Heart right ventricle (tissue), 16 donors: ENCODE measurements at regions of chr1 and their contacts with region 1.

Region 1: DNA sequence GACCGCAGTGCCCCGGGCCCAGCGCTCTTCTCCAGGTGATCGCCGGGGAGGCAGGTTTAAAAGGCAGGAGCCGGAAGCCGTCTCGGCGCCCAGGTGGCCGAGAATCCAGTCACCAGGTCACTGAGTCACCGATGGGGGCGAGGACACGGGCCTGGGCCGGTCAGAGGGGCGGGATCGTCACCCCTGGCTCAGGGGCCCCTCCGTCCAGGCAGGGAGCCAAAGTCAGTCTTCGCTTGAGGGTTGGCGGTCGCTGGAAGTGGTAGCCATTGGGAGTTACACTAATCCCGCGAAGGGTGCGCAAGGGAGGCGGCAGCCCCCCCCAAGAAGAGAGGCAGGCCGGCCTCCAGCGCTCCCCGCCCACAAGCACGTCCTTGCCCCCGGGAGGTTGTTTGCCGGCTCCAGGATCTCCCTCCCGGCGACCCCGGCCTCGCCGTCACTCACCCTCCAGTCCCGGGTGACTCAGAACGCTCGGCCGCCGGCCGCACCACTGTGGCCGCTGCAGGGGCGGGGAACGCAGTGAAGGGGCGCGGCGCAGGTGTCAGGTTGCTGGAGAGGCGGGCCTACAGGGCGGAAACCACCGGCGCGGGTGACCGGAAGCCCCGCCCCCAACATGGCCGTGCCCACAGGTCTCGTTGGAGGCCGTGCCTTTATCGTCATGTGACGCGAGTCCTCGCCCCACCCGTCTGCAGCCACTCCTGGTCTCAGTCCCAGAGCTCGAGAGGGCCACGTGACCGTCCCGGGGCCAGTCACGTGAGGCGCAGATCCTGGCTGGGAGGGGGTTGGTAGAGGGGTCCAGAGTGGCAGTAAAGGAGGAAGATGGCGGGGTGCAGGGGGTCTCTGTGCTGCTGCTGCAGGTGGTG is at the starts of genes CLCN6 and MTHFR:
- DNase-seq: peak; percentile 99
- ATAC-seq: peak; percentile 86 to 92 (median 88)
- H3K4me3 ChIP-seq: peak within 1 kb of the TSS; percentile 62 to 96 (median 80)
- H3K27ac ChIP-seq: peak within 1 kb of the TSS; percentile 96 to 100 (median 99)
- H3K4me1 ChIP-seq: peaks cover 16 to 75% (median 66%) of the 10 kb centered on the region in 9 donors
- H3K27me3 ChIP-seq: no peaks in the 10 kb centered on the region
- CTCF ChIP-seq: no peak
- total RNA-seq, gene CLCN6: 13.3 to 20.9 (median 16.9) TPM
- total RNA-seq, gene MTHFR: 28.8 to 75.8 (median 40.5) TPM

Region 2: DNA sequence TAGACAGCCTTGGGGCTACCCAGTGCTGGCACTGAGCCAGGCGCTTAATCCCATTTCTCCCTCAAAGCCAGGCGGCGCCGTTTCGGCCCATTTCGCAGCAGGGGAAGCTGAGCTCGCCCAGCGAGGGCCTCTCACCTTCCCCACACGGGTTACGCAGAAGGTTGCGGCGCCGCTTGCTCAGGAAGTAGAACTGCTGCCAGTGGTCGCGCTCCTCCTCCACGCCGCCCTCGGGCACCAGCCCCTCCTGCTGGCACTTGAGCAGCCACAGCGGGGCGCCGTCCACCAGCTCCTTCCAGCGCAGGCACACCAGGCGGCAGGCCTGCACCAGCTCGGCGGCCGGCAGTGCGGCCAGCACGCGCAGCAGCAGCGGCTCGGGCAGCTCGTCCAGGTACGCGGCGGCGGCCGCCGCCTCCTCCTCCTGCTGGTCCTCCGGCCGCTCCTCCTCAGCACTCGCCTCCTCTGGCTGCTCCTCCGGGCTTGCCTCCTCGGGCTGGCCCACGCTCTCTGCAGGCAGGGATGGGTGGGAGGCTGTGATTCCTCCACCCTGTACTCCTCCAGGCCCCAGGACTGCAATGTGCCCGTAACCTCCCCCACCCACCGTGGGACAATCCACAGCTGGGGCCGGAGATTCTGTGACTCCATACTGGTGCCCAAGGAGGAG is 155.2 kb before region 1 on chr1:
- intact Hi-C with region 1: no loop called
- DNase-seq: peak; percentile 51 to 84
- ATAC-seq: peak; percentile 48 to 77 (median 66)
- H3K4me3 ChIP-seq: peak overlapping the region in 4 of 10 donors; percentile 10 to 35 (median 20)
- H3K27ac ChIP-seq: peak overlapping the region in 1 of 10 donors; percentile 21
- H3K4me1 ChIP-seq: peaks cover 4 to 46% (median 30%) of the 10 kb centered on the region in 9 donors
- H3K27me3 ChIP-seq: peaks cover 3 to 51% (median 25%) of the 10 kb centered on the region in 7 donors
- CTCF ChIP-seq: peak; percentile 31 to 84 (median 65)

Region 3: DNA sequence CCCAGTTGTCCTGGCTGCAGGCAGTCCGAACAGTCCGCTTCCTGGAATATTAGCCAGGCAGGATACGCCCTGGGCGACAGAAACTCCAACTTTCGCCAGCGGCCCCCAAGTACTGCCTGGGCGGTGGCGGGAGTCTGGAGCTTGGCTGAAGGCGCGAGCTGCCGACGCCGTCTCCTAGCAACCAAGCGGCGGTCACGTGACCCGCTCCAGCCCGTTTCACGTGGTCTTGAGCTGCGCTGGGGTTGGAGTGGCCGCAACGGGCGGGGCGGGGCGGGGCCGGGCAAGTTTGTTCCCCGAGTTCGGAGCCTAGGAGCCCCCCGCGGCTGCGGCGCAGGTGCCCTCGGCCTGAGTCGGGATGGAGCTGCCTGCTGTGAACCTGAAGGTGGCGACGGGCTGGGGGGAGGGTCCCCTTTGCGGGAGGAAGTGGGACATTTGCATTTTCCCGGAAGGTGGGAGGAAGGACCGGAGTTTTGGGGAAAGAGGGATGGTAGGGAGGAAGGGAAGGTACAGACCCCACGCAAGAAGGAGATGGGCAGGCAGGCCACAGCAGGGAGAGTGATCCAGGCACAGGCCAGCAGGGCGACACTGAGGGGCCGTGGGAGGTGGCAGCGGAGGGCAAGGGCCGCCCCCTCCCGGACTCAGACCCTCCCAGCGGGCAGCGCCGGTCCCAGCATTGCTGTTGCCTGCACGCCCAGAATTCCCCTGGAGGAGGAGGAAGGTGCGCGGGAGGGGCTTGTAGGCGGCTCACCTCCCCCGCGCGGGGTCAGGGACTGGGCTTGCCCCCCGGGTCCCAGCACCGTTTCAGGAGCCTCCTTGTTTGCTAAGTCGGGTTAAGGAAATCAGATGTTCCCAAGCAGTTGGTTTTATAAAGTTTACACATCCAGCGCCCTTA is 69.6 kb before region 1 on chr1 and contains the start of gene AGTRAP:
- intact Hi-C with region 1: loop called in 6 of 10 experiments (anchors 2 to 10 kb)
- DNase-seq: peak; percentile 97 to 98
- ATAC-seq: peak; percentile 83 to 94 (median 92)
- H3K4me3 ChIP-seq: peak within 1 kb of the TSS; percentile 36 to 99 (median 84)
- H3K27ac ChIP-seq: peak within 1 kb of the TSS; percentile 41 to 97 (median 88)
- H3K4me1 ChIP-seq: peaks cover 6 to 75% (median 36%) of the 10 kb centered on the region in 9 donors
- H3K27me3 ChIP-seq: no peaks in the 10 kb centered on the region
- CTCF ChIP-seq: peak in 2 of 9 donors; percentile 17 to 28
- total RNA-seq, gene AGTRAP: 12.9 to 37.9 (median 16.9) TPM

Region 4: GRCh38 chr1:11768821-11769220 is 36.9 kb before region 1 on chr1:
- intact Hi-C with region 1: no loop called
- DNase-seq: no peak
- ATAC-seq: peak in 4 of 8 donors; percentile 27 to 66 (median 46)
- H3K4me3 ChIP-seq: no peak overlapping the region
- H3K27ac ChIP-seq: peak overlapping the region in 2 of 10 donors; percentile 43 to 56
- H3K4me1 ChIP-seq: peaks cover 0 to 16% (median 8%) of the 10 kb centered on the region in 9 donors
- H3K27me3 ChIP-seq: no peaks in the 10 kb centered on the region
- CTCF ChIP-seq: no peak

Region 5: GRCh38 chr1:11784993-11785769 is 20.5 kb before region 1 on chr1:
- intact Hi-C with region 1: loop called in 4 of 10 experiments (anchors 2 kb)
- DNase-seq: peak; percentile 69 to 79
- ATAC-seq: peak; percentile 50 to 68 (median 61)
- H3K4me3 ChIP-seq: peak overlapping the region in 9 of 10 donors; percentile 12 to 51 (median 40)
- H3K27ac ChIP-seq: peak overlapping the region; percentile 31 to 99 (median 85)
- H3K4me1 ChIP-seq: peaks cover 42 to 62% (median 58%) of the 10 kb centered on the region in 9 donors
- H3K27me3 ChIP-seq: no peaks in the 10 kb centered on the region
- CTCF ChIP-seq: peak; percentile 75 to 95 (median 91)

Region 6: GRCh38 chr1:11790880-11791715 is 14.6 kb before region 1 on chr1:
- intact Hi-C with region 1: loop called in 4 of 10 experiments (anchors 2 kb)
- DNase-seq: peak; percentile 87 to 97
- ATAC-seq: peak; percentile 80 to 92 (median 88)
- H3K4me3 ChIP-seq: peak overlapping the region in 2 of 10 donors; percentile 15 to 20
- H3K27ac ChIP-seq: peak overlapping the region; percentile 92 to 99 (median 97)
- H3K4me1 ChIP-seq: peaks cover 58 to 99% (median 85%) of the 10 kb centered on the region in 9 donors
- H3K27me3 ChIP-seq: no peaks in the 10 kb centered on the region
- CTCF ChIP-seq: no peak

Region 7: GRCh38 chr1:12177999-12178441 is 372.3 kb after region 1 on chr1:
- intact Hi-C with region 1: no loop called
- DNase-seq: peak in 1 of 2 donors; percentile 79
- ATAC-seq: peak in 3 of 8 donors; percentile 15 to 43 (median 34)
- H3K4me3 ChIP-seq: peak overlapping the region in 2 of 10 donors; percentile 9 to 24
- H3K27ac ChIP-seq: peak overlapping the region in 9 of 10 donors; percentile 48 to 99 (median 78)
- H3K4me1 ChIP-seq: peaks cover 17 to 100% (median 93%) of the 10 kb centered on the region in 9 donors
- H3K27me3 ChIP-seq: peaks cover 0 to 5% (median 0%) of the 10 kb centered on the region in 7 donors
- CTCF ChIP-seq: no peak